Panc1 (cell line): ENCODE measurements at regions of chr16 and their contacts with region 1.

Region 1: DNA sequence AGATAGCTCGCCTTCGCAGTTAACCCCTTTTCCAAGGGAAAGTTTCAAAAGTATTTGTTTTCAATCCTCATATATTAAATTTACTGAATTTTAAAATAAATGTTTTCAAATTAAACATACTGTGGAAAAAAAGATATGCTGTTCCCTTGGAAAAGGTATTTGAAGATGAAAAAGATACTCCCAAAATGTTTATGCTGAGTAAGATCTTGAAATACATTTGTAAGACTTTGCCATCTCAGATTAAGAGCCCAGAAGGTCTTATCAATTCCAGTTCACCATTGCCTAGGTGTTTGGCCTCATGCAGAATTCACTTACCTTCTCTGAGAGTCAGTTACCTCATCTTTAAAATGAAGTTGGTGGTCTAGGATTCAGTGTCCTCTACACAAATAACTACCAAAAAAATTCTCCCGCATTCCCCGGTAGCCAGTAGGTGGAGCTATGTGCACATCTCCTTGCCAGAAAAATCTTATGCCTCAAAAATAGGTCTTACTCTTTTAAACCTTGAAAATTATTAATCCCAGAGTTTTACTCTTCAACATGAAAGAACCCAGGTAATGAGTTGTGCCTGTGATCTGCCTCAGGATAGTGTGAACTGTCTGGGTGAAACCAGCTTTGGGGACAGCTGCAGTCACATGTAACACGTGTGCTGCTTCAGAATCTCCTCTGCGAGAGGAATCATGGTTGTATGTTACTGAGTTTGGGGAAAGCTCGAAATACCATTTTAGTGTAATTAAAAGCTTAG is 178.3 kb downstream of the MRTFB start:
- DNase-seq: peak; percentile 43
- ATAC-seq: peak; percentile 32; the same call in 1 of the 2 replicates
- H3K4me3 ChIP-seq: no peak overlapping the region
- H3K27ac ChIP-seq: no peak overlapping the region
- H3K4me1 ChIP-seq: no peaks in the 10 kb centered on the region
- H3K27me3 ChIP-seq: no peaks in the 10 kb centered on the region
- CTCF ChIP-seq: peak; percentile 96

Region 2: DNA sequence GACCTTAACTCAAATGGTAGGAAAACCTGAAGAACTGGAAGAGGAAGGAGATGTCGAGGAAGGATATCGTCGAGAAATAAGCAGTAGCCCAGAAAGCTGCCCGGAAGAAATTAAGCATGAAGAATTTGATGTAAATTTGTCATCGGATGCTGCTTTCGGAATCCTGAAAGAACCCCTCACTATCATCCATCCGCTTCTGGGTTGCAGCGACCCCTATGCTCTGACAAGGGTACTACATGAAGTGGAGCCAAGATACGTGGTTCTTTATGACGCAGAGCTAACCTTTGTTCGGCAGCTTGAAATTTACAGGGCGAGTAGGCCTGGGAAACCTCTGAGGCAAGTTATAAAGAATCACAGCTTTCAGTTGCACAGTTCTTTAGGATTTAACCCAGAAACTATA is 314.1 kb before region 1 on chr16:
- CTCF ChIA-PET with region 1: no interaction called
- POLR2A ChIA-PET with region 1: no interaction called
- in situ Hi-C with region 1: loop called (anchors 25 kb)
- intact Hi-C with region 1: no loop called
- DNase-seq: no peak
- ATAC-seq: no peak
- H3K4me3 ChIP-seq: no peak overlapping the region
- H3K27ac ChIP-seq: no peak overlapping the region
- H3K4me1 ChIP-seq: no peaks in the 10 kb centered on the region
- H3K27me3 ChIP-seq: no peaks in the 10 kb centered on the region
- CTCF ChIP-seq: peak; percentile 69

Region 3: GRCh38 chr16:14529010-14529669 is 279.7 kb after region 1 on chr16:
- CTCF ChIA-PET with region 1: no interaction called
- POLR2A ChIA-PET with region 1: no interaction called
- in situ Hi-C with region 1: no loop called
- intact Hi-C with region 1: loop called (anchors 10 kb)
- DNase-seq: peak; percentile 87
- ATAC-seq: peak; percentile 91
- H3K4me3 ChIP-seq: no peak overlapping the region
- H3K27ac ChIP-seq: peak overlapping the region; percentile 72
- H3K4me1 ChIP-seq: peaks cover 8% of the 10 kb centered on the region
- H3K27me3 ChIP-seq: no peaks in the 10 kb centered on the region
- CTCF ChIP-seq: peak; percentile 87

Region 4: DNA sequence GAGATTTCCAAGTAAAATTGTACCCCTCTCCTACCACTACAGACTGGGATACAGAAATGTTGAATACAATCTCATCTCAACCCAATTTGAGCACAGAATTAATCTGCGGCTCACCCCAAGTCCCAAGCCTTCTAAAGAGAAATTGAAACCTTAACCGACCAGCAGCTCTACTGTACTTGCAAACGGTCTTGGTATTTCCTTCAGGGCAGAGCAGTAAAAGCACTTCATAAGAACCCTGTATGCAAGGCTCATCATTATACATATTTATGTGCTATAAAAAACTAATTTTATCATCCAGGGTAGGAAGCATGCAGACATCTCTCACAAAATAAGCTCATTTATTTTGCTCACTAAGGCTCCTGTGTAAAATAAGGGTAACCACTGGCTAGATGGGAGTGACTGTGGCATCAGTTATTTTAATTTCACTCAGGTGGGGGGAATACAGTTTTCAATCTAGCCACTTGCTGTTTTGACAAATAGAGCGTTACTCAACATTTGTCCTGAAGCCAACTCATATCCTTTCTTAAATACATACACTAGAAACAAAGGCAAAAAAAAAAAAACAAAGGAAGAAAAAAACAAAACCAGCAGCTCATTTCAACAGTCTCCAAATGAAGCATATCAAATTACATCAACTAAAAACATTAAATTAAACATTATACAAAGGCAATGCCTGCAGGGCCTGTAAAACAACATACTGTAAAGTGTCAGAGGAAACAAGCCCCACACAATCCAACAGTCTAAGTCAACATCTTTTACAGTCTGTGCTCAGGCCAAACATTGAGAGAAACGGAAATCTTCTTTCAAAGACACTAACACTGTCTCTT is 315.6 kb after region 1 on chr16:
- CTCF ChIA-PET with region 1: no interaction called
- POLR2A ChIA-PET with region 1: no interaction called
- in situ Hi-C with region 1: no loop called
- intact Hi-C with region 1: no loop called
- DNase-seq: no peak
- ATAC-seq: peak; percentile 74
- H3K4me3 ChIP-seq: no peak overlapping the region
- H3K27ac ChIP-seq: no peak overlapping the region; the same call in 1 of the 2 replicates
- H3K4me1 ChIP-seq: peaks cover 19% of the 10 kb centered on the region; the same call in 1 of the 2 replicates
- H3K27me3 ChIP-seq: no peaks in the 10 kb centered on the region
- CTCF ChIP-seq: no peak